Dorsolateral prefrontal cortex (tissue), 120 donors: ENCODE measurements at regions of chr6 and their contacts with region 1.

Region 1: GRCh38 chr6:13487122-13488014 is at the start of gene GFOD1:
- DNase-seq: peak; percentile 74 to 92 (median 86)
- H3K4me3 ChIP-seq: peak within 1 kb of the TSS; percentile 65 to 94 (median 84)
- H3K27ac ChIP-seq: peak within 1 kb of the TSS; percentile 73 to 97 (median 92)
- H3K27me3 ChIP-seq: no peaks in the 10 kb centered on the region
- CTCF ChIP-seq: peak in 26 of 56 donors; percentile 4 to 51 (median 25)
- total RNA-seq, gene GFOD1: 36.8 to 141 (median 101) TPM

Region 2: DNA sequence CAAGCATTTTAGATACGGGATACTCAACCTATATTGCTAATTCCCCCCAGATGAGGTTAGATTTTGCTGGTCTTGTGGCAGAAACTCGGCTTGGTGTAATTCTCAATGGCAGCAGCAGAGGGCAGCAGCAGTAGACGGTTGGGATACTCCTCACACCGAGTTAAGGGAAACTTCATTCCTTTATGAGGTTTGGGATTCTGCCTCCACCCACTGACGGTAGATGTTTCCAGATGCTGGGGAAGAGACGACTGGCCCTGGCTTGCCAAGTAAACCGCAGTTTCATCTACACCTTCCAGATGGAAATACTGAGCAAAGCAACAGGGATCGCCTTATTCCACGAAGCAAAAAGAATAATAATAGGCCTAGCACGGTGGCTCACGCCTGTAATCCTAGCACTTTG is 150.8 kb before region 1 on chr6:
- intact Hi-C with region 1: loop called (anchors 5 to 10 kb)
- DNase-seq: peak; percentile 72 to 93 (median 80)
- H3K4me3 ChIP-seq: peak overlapping the region in 2 of 59 donors; percentile 11 to 19
- H3K27ac ChIP-seq: peak overlapping the region in 5 of 59 donors; percentile 26 to 68 (median 54)
- H3K27me3 ChIP-seq: no peaks in the 10 kb centered on the region
- CTCF ChIP-seq: peak; percentile 83 to 98 (median 93)

Region 3: GRCh38 chr6:13454286-13455221 is 32.8 kb before region 1 on chr6:
- intact Hi-C with region 1: loop called in 1 of 2 experiments (anchors 5 kb)
- DNase-seq: peak in 9 of 10 donors; percentile 58 to 91 (median 84)
- H3K4me3 ChIP-seq: peak overlapping the region in 41 of 59 donors; percentile 5 to 49 (median 22)
- H3K27ac ChIP-seq: peak overlapping the region in 55 of 59 donors; percentile 45 to 96 (median 75)
- H3K27me3 ChIP-seq: no peaks in the 10 kb centered on the region
- CTCF ChIP-seq: peak in 54 of 56 donors; percentile 15 to 76 (median 54)

Region 4: GRCh38 chr6:13538084-13538483 is 50.7 kb after region 1 on chr6:
- intact Hi-C with region 1: loop called in 1 of 2 experiments (anchors 5 kb)
- DNase-seq: no peak
- H3K4me3 ChIP-seq: no peak overlapping the region
- H3K27ac ChIP-seq: peak overlapping the region in 1 of 59 donors; percentile 8
- H3K27me3 ChIP-seq: no peaks in the 10 kb centered on the region
- CTCF ChIP-seq: peak in 54 of 56 donors; percentile 36 to 78 (median 60)

Region 5: DNA sequence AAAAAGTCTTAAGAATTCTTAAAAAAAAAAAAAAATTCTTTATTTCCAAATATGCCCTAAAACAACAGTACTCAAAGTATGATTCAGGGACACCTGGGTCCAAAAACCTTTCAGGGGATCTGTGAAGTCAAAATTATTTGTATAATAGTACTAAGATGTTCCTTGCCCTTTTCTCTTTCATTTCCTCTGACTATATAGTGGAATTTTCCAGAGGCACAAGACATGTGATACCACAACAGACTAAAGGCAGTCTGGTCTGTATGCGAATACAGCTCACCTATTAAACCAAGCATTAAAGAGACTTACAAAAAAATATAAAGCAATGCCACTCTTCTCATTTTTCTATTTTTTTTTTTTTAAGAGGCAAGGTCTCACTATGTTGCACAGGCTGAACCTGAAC is 143.1 kb after region 1 on chr6:
- intact Hi-C with region 1: no loop called
- DNase-seq: no peak
- H3K4me3 ChIP-seq: no peak overlapping the region
- H3K27ac ChIP-seq: no peak overlapping the region
- H3K27me3 ChIP-seq: no peaks in the 10 kb centered on the region
- CTCF ChIP-seq: no peak

Region 6: GRCh38 chr6:13711733-13712598 is 224.6 kb after region 1 on chr6 and contains the start of gene RANBP9:
- intact Hi-C with region 1: loop called in 1 of 2 experiments (anchors 5 kb)
- DNase-seq: peak; percentile 62 to 89 (median 81)
- H3K4me3 ChIP-seq: peak within 1 kb of the TSS; percentile 68 to 95 (median 83)
- H3K27ac ChIP-seq: peak within 1 kb of the TSS; percentile 89 to 99 (median 96)
- H3K27me3 ChIP-seq: no peaks in the 10 kb centered on the region
- CTCF ChIP-seq: peak in 19 of 56 donors; percentile 8 to 41 (median 22)
- total RNA-seq, gene RANBP9: 48.7 to 98.0 (median 80.1) TPM

Region 7: GRCh38 chr6:13742961-13743735 is 255.8 kb after region 1 on chr6:
- intact Hi-C with region 1: no loop called
- DNase-seq: no peak
- H3K4me3 ChIP-seq: peak overlapping the region in 1 of 59 donors; percentile 9
- H3K27ac ChIP-seq: no peak overlapping the region
- H3K27me3 ChIP-seq: no peaks in the 10 kb centered on the region
- CTCF ChIP-seq: no peak